SK-N-SH (cell line): ENCODE measurements at regions of chr16 and their contacts with region 1.

Region 1: DNA sequence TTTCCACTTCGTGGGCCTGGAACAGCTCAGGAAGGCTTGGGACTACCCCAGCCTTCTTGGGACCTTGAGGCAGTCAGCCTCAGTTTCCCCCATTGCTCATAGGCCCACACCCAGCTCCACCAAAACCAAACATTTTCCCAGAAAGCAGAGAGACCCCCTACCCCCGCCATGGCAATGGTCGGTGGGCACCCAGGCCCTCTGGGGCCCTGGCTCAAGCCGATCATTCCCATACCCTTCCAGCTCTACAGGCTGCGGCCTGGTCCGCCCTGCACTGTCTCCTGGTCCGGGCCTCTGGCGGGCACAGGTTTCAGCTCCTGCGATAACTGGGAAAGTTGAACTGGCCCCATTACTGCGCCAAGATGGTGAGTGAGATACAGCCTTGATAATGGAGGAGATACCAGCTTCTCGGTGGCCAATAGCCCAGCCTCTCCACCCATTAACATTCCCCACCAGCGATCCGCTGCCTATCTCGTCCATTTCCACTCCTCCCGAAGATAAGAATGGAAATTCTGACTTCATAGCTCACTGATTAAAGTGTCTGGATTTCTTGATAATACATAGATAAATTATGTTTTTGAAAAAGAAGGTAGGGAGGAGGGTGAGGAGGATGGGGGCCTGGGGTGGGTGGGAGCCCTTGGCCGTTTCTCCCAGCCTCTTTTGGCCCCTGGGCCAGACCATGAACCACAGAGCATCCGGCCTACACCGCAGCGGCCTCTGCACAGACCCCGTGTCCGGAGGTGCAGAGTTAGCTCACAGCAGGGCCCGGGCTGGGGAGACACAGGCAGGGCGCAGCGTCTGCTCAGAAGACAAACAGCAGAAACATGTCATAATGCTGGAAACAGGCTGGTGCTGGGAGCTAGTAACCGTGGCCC is 11.6 kb downstream of the ZFPM1 start:
- DNase-seq: peak; percentile 90
- H3K4me3 ChIP-seq: no peak overlapping the region
- H3K27ac ChIP-seq: peak overlapping the region; percentile 60 to 98; a peak in 3 of 4 replicates
- H3K4me1 ChIP-seq: peaks cover 0 to 94% of the 10 kb centered on the region in 2 experiments; a peak in 2 of 4 replicates
- H3K27me3 ChIP-seq: no peaks in the 10 kb centered on the region
- CTCF ChIP-seq: no peak
- EP300 ChIP-seq: peak in 1 of 2 experiments; percentile 64; a peak in 2 of 4 replicates
- RAD21 ChIP-seq: peak; percentile 8; the same call in 1 of the 2 replicates

Region 2: GRCh38 chr16:88430524-88431446 is 33.9 kb before region 1 on chr16:
- CTCF ChIA-PET with region 1: no interaction called
- POLR2A ChIA-PET with region 1: no interaction called
- DNase-seq: no peak
- H3K4me3 ChIP-seq: no peak overlapping the region
- H3K27ac ChIP-seq: no peak overlapping the region
- H3K4me1 ChIP-seq: peaks cover 0 to 3% of the 10 kb centered on the region in 2 experiments; a peak in 1 of 4 replicates
- H3K27me3 ChIP-seq: no peaks in the 10 kb centered on the region
- CTCF ChIP-seq: no peak
- EP300 ChIP-seq: no peak
- RAD21 ChIP-seq: no peak

Region 3: DNA sequence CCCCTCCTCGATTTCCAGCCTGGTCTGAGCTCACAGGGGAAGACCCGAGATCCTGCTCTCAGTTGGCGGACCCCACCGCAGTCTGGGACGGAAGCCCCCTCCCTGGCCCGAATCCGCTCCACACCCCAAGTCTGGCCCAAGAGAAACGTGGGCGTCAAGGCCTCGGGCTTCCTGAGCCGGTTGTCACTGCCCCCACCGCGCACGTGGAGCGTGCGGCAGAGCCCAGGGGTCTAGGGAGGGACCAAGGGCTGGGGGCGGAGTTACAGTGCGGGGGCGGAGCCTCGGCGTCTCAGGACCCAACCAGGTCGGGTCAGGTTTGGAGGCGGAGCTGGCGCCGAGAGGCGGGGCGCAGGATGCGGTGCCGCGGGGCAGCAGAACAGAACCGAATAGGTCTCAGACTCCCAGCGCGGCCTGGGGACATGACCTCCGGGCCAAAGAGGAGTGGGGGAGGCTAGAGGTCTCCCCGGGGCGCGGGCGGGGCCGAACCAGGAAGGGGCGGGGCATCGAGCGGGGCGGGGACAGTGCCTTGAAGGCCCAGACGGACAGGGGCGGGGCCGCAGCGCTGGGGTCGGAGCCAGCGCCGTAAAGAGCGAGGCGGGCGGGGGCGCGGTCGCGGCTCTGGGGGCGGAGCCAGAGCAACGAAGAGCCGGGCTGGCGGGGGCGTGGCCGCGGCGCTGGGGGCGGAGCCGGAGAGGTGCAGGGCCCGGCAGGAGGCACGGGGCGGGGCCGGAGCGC is 12.0 kb before region 1 on chr16:
- CTCF ChIA-PET with region 1: interaction called, 13 read pairs
- POLR2A ChIA-PET with region 1: interaction called, 8 read pairs
- DNase-seq: peak; percentile 98
- H3K4me3 ChIP-seq: peak overlapping the region; percentile 57 to 75
- H3K27ac ChIP-seq: peak overlapping the region; percentile 56 to 86; a peak in 3 of 4 replicates
- H3K4me1 ChIP-seq: peaks cover 13 to 61% of the 10 kb centered on the region in 2 experiments; a peak in 3 of 4 replicates
- H3K27me3 ChIP-seq: no peaks in the 10 kb centered on the region
- CTCF ChIP-seq: no peak
- EP300 ChIP-seq: no peak
- RAD21 ChIP-seq: no peak